HepG2 (cell line): ENCODE measurements at regions of chr7 and their contacts with region 1.

Region 1: DNA sequence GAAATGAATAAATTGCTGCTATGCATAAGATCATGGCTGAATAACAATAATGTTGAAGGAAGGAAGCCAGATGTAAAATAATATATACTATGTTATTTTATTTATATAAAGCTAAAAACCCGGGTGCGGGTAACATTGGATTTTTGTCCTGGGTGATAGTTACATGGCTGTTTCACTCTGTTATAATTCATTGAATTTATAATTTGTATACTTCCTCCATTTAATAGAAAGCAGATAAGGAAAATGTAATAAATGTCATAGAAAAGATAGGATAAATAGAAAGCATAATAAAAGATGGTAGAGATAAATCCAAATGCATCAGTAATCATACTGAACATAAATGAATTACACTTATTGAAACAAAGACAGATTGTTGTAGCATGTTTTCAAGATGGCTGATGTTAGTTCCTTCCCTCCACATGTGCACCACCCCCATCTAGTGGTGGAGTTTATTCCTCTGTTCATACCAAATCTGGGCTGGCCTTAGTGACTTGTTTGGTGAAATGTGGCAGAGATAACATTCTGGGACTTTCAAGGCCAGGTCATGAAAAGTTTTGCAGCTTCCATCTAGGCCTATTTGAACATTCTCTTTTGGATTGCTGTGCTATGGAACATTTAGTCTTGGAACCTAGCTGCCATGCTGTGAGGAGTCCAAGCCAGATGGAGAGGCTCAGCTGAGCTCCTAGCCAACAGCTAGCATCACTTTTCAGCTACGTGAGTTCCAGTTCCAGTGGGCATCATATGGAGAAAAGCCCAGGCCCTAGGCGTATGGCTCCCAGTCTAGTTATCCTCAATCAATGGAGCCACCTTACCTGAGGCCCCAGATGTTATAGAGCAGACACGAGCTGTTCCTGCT is 46.9 kb downstream of the AHCYL2 start:
- DNase-seq: peak; percentile 64
- ATAC-seq: peak; percentile 87
- H3K4me3 ChIP-seq: no peak overlapping the region
- H3K27ac ChIP-seq: no peak overlapping the region
- H3K4me1 ChIP-seq: no peaks in the 10 kb centered on the region
- H3K27me3 ChIP-seq: no peaks in the 10 kb centered on the region
- CTCF ChIP-seq: peak; percentile 72
- EP300 ChIP-seq: no peak
- POLR2A ChIP-seq: no peak
- RAD21 ChIP-seq: 0 out of 2 replicates have a peak, but pooled peaks have one; percentile 21

Region 2: DNA sequence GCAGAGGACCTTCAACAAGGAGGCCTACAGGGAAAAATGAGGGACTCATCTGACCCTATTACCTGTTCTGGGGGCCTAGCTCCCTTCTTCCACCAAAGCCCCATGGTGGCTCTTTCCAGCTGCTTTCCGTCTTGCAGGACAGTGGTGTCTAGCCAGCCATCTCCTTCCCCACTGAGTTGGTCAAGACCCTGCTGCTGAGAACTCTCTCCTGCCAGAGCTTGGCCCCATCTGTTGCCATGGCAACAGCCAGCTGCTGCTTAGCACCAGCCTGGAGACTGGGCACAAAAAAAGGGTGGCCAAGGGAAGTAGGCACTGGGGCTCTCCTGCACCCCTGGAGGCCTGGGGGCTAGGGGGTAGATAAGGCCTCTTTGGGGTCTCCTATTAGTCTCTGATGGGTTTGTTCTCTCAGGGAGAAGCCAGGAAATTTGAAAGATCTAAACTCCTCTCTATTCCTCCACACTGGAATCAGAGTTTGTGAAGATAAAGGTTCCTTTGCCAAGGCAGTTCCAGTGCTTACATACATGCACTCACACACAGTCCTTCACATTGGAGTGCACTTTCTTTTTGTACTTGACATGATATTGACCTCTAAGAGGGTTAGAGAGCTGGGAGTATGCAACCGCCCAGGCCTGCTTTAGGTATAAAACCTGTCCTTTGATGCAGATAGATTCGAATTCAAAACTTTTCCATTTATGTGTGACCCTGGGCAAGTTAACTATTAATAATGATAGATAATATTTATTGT is 111.4 kb before region 1 on chr7:
- CTCF ChIA-PET with region 1: no interaction called
- POLR2A ChIA-PET with region 1: no interaction called
- in situ Hi-C with region 1: no loop called
- intact Hi-C with region 1: no loop called
- DNase-seq: no peak
- ATAC-seq: no peak
- H3K4me3 ChIP-seq: no peak overlapping the region
- H3K27ac ChIP-seq: no peak overlapping the region
- H3K4me1 ChIP-seq: no peaks in the 10 kb centered on the region
- H3K27me3 ChIP-seq: no peaks in the 10 kb centered on the region
- CTCF ChIP-seq: no peak
- EP300 ChIP-seq: no peak
- POLR2A ChIP-seq: no peak
- RAD21 ChIP-seq: no peak

Region 3: DNA sequence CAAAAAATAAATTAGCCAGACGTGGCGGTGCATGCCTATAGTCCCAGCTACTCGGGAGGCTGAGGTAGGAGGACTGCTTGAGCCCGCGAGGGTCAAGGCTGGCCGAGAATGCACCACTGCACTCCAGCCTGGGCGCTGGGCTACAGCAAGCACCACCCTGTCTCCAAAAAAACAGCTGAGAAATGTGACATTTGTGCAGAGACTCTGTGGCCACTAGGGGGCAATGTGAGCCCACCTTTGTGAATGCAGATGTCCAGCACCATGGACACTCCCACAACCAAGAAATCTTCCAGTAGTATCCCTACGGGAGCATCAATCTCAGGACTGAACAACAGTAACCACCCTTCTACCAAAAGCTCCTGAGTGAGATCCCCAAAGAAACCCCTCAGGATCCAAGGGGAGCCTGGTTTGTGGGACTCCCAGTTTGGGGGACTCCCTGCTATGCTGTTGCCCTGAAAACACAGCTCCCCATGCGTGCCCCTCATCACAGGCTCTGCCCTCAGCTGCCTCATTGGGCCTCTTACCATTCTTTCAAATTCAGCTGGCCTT is 53.1 kb before region 1 on chr7:
- CTCF ChIA-PET with region 1: interaction called, 30 read pairs
- POLR2A ChIA-PET with region 1: no interaction called
- in situ Hi-C with region 1: no loop called
- intact Hi-C with region 1: loop called (anchors 1 kb)
- DNase-seq: peak; percentile 81
- ATAC-seq: peak; percentile 82
- H3K4me3 ChIP-seq: peak overlapping the region in 1 of 3 experiments; percentile 35; a peak in 1 of 6 replicates
- H3K27ac ChIP-seq: no peak overlapping the region
- H3K4me1 ChIP-seq: peaks cover 34% of the 10 kb centered on the region
- H3K27me3 ChIP-seq: no peaks in the 10 kb centered on the region
- CTCF ChIP-seq: peak; percentile 96
- EP300 ChIP-seq: no peak
- POLR2A ChIP-seq: no peak
- RAD21 ChIP-seq: peak; percentile 90

Region 4: DNA sequence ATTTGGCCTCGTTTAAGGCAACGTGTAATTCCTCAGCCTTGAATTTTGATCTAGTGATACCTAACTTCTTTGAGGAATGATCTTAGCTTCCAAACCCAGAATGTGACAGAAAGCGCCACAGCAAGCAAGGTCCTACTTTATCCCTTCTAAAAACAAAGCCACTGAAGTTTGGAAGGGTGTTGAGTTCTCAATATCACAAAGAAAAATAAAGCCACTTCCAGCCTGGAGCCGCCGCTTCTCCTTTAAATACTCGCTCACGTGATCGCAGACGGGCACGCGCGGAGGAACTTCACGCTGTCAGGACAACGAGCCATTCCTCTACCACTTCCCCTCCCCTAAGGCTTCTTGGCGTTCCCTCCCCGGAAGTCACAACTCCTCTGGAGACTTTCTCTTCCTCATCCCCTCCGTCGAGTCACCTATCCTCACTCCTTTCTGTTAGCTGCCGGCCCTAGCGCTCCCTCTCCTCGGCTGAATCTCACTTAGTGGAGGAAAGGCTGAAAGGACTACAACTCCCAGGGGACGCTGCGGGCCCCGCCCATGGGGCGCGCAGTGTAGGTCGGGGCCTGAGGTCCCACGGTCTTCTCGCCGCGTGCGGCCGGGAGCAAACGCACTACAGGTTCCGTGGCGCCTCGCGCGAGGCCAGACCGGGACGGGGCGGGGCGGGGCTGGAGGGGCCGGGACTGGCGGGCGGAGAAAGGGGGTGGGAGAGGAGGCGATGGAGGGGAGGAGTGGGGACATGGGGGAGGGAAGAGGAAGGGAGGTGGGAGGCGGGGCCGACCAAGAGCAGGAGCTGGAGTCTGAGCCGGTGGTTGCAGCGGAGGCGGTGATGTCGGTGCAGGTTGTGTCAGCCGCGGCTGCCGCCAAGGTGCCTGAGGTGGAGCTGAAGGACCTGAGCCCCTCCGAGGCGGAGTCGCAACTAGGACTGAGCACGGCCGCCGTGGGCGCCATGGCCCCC is 47.2 kb before region 1 on chr7 and contains the start of gene AHCYL2:
- CTCF ChIA-PET with region 1: interaction called, 3 read pairs
- POLR2A ChIA-PET with region 1: no interaction called
- in situ Hi-C with region 1: no loop called
- intact Hi-C with region 1: loop called (anchors 2 kb)
- DNase-seq: peak; percentile 91
- ATAC-seq: peak; percentile 96
- H3K4me3 ChIP-seq: peak within 1 kb of the TSS; percentile 76 to 97 (median 82)
- H3K27ac ChIP-seq: peak within 1 kb of the TSS; percentile 68
- H3K4me1 ChIP-seq: peaks cover 28% of the 10 kb centered on the region
- H3K27me3 ChIP-seq: no peaks in the 10 kb centered on the region
- CTCF ChIP-seq: no peak
- EP300 ChIP-seq: no peak
- POLR2A ChIP-seq: peak; percentile 68 to 86; a peak in 3 of 4 replicates
- RAD21 ChIP-seq: no peak
- total RNA-seq, gene AHCYL2: 9.5 and 12.9 TPM in 2 replicates

Region 5: GRCh38 chr7:129561677-129562359 is 290.1 kb after region 1 on chr7:
- CTCF ChIA-PET with region 1: no interaction called
- POLR2A ChIA-PET with region 1: no interaction called
- in situ Hi-C with region 1: no loop called
- intact Hi-C with region 1: no loop called
- DNase-seq: no peak
- ATAC-seq: peak; percentile 64
- H3K4me3 ChIP-seq: no peak overlapping the region
- H3K27ac ChIP-seq: no peak overlapping the region
- H3K4me1 ChIP-seq: peaks cover 28% of the 10 kb centered on the region
- H3K27me3 ChIP-seq: peaks cover 0 to 3% of the 10 kb centered on the region in 2 experiments; a peak in 1 of 5 replicates
- CTCF ChIP-seq: no peak
- EP300 ChIP-seq: no peak
- POLR2A ChIP-seq: no peak
- RAD21 ChIP-seq: no peak